CD4-positive, alpha-beta memory T cell (primary cell): ENCODE measurements at regions of chr5 and their contacts with region 1.

Region 1: DNA sequence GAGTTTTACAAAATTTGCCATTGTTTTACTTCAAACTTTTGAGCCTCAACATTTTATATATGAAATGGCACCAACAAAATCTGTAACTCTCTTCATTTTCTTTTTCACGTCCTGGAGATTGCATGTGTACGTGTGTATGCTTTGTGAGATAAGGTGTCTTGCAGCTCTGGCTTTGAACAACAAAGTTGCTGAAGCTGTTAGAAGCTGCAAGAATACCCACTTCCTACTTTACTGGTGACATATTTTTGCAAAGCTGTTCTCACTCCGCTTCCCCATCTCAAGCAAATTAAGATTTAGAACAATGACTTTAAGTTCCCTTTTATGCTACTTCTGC is 41.8 kb downstream of the FYB1 start:
- DNase-seq: peak; percentile 67 to 78 (median 71)
- H3K4me3 ChIP-seq: peak overlapping the region; percentile 18 to 25
- H3K4me3 Mint-ChIP-seq: peak overlapping the region; percentile 66 to 81 (median 75)
- H3K27ac ChIP-seq: peak overlapping the region; percentile 56
- H3K27ac Mint-ChIP-seq: peak overlapping the region; percentile 91 to 97 (median 92)
- H3K4me1 ChIP-seq: peaks cover 100% of the 10 kb centered on the region
- H3K4me1 Mint-ChIP-seq: peaks cover 87 to 98% (median 93%) of the 10 kb centered on the region in 4 donors
- H3K27me3 ChIP-seq: no peaks in the 10 kb centered on the region
- H3K27me3 Mint-ChIP-seq: no peaks in the 10 kb centered on the region

Region 2: GRCh38 chr5:38845526-38846378 is 331.8 kb before region 1 on chr5 and contains the start of gene OSMR:
- CTCF ChIA-PET with region 1: no interaction called
- POLR2A ChIA-PET with region 1: no interaction called
- intact Hi-C with region 1: no loop called
- DNase-seq: no peak
- H3K4me3 ChIP-seq: no peak within 1 kb of the TSS
- H3K4me3 Mint-ChIP-seq: peak within 1 kb of the TSS; percentile 19 to 81 (median 73)
- H3K27ac ChIP-seq: no peak within 1 kb of the TSS
- H3K27ac Mint-ChIP-seq: no peak within 1 kb of the TSS
- H3K4me1 ChIP-seq: peaks cover 4% of the 10 kb centered on the region
- H3K4me1 Mint-ChIP-seq: peaks cover 3 to 18% (median 6%) of the 10 kb centered on the region in 4 donors
- H3K27me3 ChIP-seq: no peaks in the 10 kb centered on the region
- H3K27me3 Mint-ChIP-seq: peaks cover 44% of the 10 kb centered on the region in 2 donors
- total RNA-seq, gene OSMR: not detected

Region 3: DNA sequence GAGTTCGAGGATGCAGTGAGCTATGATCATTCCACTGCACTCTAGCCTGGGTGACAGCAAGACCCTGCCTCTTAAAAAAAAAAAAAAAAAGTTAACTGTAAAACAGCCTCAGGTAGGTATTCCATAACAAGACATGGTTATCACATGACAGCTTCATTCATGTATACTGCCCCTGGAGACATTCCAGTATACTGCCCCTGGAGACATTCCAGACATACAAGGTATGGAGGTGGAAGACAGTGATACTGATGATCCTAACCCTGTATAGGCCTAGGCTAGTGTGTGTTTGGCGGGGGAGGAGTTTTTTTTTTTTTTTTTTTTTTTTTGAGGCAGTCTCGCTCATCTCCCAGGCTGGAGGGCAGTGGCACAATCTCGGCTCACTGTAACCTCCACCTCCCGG is 208.9 kb before region 1 on chr5:
- CTCF ChIA-PET with region 1: no interaction called
- POLR2A ChIA-PET with region 1: no interaction called
- intact Hi-C with region 1: no loop called
- DNase-seq: no peak
- H3K4me3 ChIP-seq: no peak overlapping the region
- H3K4me3 Mint-ChIP-seq: no peak overlapping the region
- H3K27ac ChIP-seq: no peak overlapping the region
- H3K27ac Mint-ChIP-seq: no peak overlapping the region
- H3K4me1 ChIP-seq: no peaks in the 10 kb centered on the region
- H3K4me1 Mint-ChIP-seq: no peaks in the 10 kb centered on the region
- H3K27me3 ChIP-seq: no peaks in the 10 kb centered on the region
- H3K27me3 Mint-ChIP-seq: no peaks in the 10 kb centered on the region

Region 4: GRCh38 chr5:39158127-39158593 is 19.4 kb before region 1 on chr5:
- CTCF ChIA-PET with region 1: interaction called, 12 read pairs
- POLR2A ChIA-PET with region 1: interaction called, 1,810 read pairs
- intact Hi-C with region 1: loop called (anchors 1 kb)
- DNase-seq: peak in 1 of 5 donors; percentile 58
- H3K4me3 ChIP-seq: peak overlapping the region in 1 of 2 donors; percentile 7
- H3K4me3 Mint-ChIP-seq: peak overlapping the region in 7 of 8 donors; percentile 55 to 83 (median 71)
- H3K27ac ChIP-seq: peak overlapping the region; percentile 30
- H3K27ac Mint-ChIP-seq: peak overlapping the region; percentile 78 to 94 (median 89)
- H3K4me1 ChIP-seq: peaks cover 100% of the 10 kb centered on the region
- H3K4me1 Mint-ChIP-seq: peaks cover 63 to 88% (median 74%) of the 10 kb centered on the region in 4 donors
- H3K27me3 ChIP-seq: no peaks in the 10 kb centered on the region
- H3K27me3 Mint-ChIP-seq: no peaks in the 10 kb centered on the region

Region 5: DNA sequence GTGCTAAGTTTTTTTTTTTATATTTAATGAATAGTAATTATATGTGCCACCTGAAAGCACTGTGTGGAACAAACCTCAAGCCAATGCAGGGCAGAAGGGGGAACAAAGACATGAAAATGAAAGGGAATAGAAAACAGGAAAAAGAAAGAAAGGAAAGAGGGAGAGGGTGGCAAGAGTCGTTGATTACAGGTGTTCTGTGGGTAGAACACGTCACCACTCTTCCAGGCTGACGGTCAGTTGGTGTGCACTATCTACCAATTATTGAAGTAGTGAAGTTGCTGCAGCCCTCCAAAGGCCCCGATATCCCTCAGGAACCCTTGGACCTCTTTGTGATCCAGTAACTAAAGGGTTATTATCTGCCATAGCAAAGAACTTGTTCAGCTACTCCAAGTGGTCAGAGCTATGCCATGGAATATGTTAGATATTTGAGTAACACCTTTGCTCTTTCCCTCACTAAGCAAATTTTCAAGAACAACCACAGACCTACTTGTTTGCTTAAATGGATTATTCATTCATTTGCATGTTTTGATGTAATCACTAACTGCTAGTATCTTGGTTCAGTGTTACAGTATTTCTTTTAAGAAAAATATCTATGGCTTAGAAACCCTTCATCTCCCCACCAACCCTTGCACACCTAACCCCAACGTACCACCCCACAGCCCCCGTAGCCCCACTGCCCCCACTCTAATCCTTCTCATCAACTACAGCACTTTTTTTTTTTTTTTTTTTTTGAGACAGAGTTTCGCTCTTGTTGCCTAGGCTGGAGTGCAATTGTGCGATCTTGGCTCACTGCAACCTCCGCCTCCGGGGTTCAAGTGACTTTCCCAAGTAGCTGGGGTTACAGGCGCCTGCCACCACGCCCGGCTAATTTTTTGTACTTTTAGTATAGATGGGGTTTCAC is 10.5 kb after region 1 on chr5:
- CTCF ChIA-PET with region 1: interaction called, 252 read pairs
- POLR2A ChIA-PET with region 1: interaction called, 1,810 read pairs
- intact Hi-C with region 1: loop called (anchors 1 kb)
- DNase-seq: peak in 2 of 5 donors; percentile 58 to 70
- H3K4me3 ChIP-seq: peak overlapping the region in 1 of 2 donors; percentile 9
- H3K4me3 Mint-ChIP-seq: peak overlapping the region; percentile 84 to 96 (median 90)
- H3K27ac ChIP-seq: peak overlapping the region; percentile 59
- H3K27ac Mint-ChIP-seq: peak overlapping the region; percentile 95 to 99 (median 99)
- H3K4me1 ChIP-seq: peaks cover 98% of the 10 kb centered on the region
- H3K4me1 Mint-ChIP-seq: peaks cover 71 to 96% (median 83%) of the 10 kb centered on the region in 4 donors
- H3K27me3 ChIP-seq: no peaks in the 10 kb centered on the region
- H3K27me3 Mint-ChIP-seq: no peaks in the 10 kb centered on the region

Region 6: DNA sequence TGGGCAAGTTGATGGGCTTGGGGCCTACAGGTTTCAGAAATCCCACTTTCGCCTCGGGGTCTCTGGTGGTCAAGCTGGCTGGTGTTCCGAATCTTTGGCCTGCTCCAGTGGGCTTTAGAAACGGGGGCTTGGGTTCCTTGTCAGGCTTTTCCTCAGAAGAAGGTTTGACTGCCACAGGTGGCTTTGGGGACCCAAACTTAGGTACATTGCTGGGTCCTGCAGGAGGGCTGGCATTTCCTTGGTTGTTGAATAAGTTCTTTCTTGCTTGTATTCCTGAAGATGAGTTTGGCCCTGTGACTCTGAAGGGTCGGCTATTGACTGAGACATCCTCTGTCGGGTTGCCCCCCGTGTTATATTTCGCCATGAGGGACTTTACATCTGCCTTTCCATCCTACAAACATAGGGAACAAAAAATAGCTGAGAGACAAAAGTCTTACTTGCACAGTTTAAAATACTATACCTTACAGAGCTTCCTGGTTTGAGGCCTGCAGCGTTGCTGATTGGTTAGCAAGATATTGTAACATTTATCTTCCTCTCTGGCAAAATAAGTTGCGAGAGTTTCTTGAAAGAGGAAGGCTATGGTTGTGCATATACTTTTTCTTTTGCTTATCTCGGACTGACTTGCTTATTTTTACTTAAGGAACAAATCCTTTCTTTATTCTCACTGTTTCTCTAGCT is 25.1 kb after region 1 on chr5:
- CTCF ChIA-PET with region 1: interaction called, 30 read pairs
- POLR2A ChIA-PET with region 1: interaction called, 1,810 read pairs
- intact Hi-C with region 1: loop called (anchors 1 kb)
- DNase-seq: peak; percentile 59 to 70 (median 67)
- H3K4me3 ChIP-seq: peak overlapping the region; percentile 74 to 96
- H3K4me3 Mint-ChIP-seq: peak overlapping the region; percentile 94 to 100 (median 98)
- H3K27ac ChIP-seq: peak overlapping the region; percentile 84
- H3K27ac Mint-ChIP-seq: peak overlapping the region; percentile 91 to 99 (median 96)
- H3K4me1 ChIP-seq: peaks cover 44% of the 10 kb centered on the region
- H3K4me1 Mint-ChIP-seq: peaks cover 31 to 51% (median 40%) of the 10 kb centered on the region in 4 donors
- H3K27me3 ChIP-seq: no peaks in the 10 kb centered on the region
- H3K27me3 Mint-ChIP-seq: no peaks in the 10 kb centered on the region

Region 7: GRCh38 chr5:39274398-39275085 is 96.9 kb after region 1 on chr5:
- CTCF ChIA-PET with region 1: interaction called, 4 read pairs
- POLR2A ChIA-PET with region 1: interaction called, 17 read pairs
- intact Hi-C with region 1: no loop called
- DNase-seq: peak; percentile 36 to 53 (median 41)
- H3K4me3 ChIP-seq: peak overlapping the region; percentile 20 to 25
- H3K4me3 Mint-ChIP-seq: peak overlapping the region; percentile 72 to 89 (median 85)
- H3K27ac ChIP-seq: peak overlapping the region; percentile 73
- H3K27ac Mint-ChIP-seq: peak overlapping the region; percentile 90 to 98 (median 96)
- H3K4me1 ChIP-seq: peaks cover 54% of the 10 kb centered on the region
- H3K4me1 Mint-ChIP-seq: peaks cover 37 to 71% (median 51%) of the 10 kb centered on the region in 4 donors
- H3K27me3 ChIP-seq: no peaks in the 10 kb centered on the region
- H3K27me3 Mint-ChIP-seq: no peaks in the 10 kb centered on the region

Region 8: DNA sequence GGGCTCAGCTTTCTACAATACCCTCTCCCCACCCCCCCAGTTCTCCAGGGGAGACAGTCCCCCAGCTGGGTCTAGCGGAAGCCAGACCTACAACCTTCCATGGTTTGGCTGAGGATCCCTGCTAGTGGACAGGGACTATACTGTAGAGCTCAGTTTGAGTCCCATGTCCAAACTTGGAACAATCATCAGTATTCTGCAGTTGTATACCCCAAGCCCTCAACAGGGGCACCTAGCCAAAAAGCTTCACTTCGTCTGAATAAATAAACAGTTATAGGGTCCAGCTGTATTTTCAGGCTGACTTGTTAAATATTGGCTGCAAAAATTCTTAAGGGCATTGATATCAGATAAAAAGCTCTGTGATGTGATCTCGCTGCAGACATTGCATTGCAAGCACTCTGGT is 202.1 kb after region 1 on chr5:
- CTCF ChIA-PET with region 1: no interaction called
- POLR2A ChIA-PET with region 1: no interaction called
- intact Hi-C with region 1: no loop called
- DNase-seq: no peak
- H3K4me3 ChIP-seq: no peak overlapping the region
- H3K4me3 Mint-ChIP-seq: no peak overlapping the region
- H3K27ac ChIP-seq: no peak overlapping the region
- H3K27ac Mint-ChIP-seq: no peak overlapping the region
- H3K4me1 ChIP-seq: no peaks in the 10 kb centered on the region
- H3K4me1 Mint-ChIP-seq: peaks cover 0 to 4% (median 0%) of the 10 kb centered on the region in 4 donors
- H3K27me3 ChIP-seq: no peaks in the 10 kb centered on the region
- H3K27me3 Mint-ChIP-seq: peaks cover 12 to 20% of the 10 kb centered on the region in 2 donors